Psoas muscle (tissue), 8 donors: ENCODE measurements at regions of chr16 and their contacts with region 1.

Region 1: GRCh38 chr16:1929578-1930337 is 11.5 kb upstream of the HS3ST6 start:
- DNase-seq: peak; percentile 92 to 95
- ATAC-seq: peak; percentile 94 to 98 (median 96)
- H3K4me3 ChIP-seq: peak overlapping the region; percentile 71
- H3K27ac ChIP-seq: peak overlapping the region; percentile 67
- H3K4me1 ChIP-seq: peaks cover 3% of the 10 kb centered on the region
- H3K27me3 ChIP-seq: peaks cover 0 to 4% (median 0%) of the 10 kb centered on the region in 3 donors
- CTCF ChIP-seq: peak; percentile 99

Region 2: DNA sequence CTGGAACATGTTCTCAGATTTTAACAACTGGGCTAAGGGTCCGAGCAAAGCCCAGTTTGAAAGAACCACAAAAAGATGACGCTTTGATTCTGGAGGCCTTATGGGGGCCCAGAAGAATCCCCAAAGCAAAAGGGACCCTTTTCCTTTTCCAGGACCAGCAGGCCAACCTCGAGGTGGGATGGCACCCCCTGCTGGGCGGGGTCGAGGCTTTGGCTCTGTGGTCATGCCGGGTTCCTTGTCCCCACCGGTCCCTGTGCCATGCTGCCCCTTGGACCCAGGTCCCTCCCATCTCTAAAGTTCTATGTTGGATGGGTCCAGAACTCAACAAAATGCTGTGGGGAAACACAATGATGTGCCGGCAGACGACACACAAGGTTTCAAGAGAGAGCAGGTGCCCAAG is 365.4 kb before region 1 on chr16:
- intact Hi-C with region 1: no loop called
- DNase-seq: no peak
- ATAC-seq: peak in 2 of 4 donors; percentile 54 to 67
- H3K4me3 ChIP-seq: no peak overlapping the region
- H3K27ac ChIP-seq: no peak overlapping the region
- H3K4me1 ChIP-seq: no peaks in the 10 kb centered on the region
- H3K27me3 ChIP-seq: no peaks in the 10 kb centered on the region
- CTCF ChIP-seq: peak; percentile 42

Region 3: GRCh38 chr16:1863681-1864460 is 65.9 kb before region 1 on chr16:
- intact Hi-C with region 1: loop called (anchors 1 to 5 kb)
- DNase-seq: no peak
- ATAC-seq: peak in 2 of 4 donors; percentile 27 to 42
- H3K4me3 ChIP-seq: no peak overlapping the region
- H3K27ac ChIP-seq: no peak overlapping the region
- H3K4me1 ChIP-seq: no peaks in the 10 kb centered on the region
- H3K27me3 ChIP-seq: peaks cover 0 to 50% (median 2%) of the 10 kb centered on the region in 3 donors
- CTCF ChIP-seq: peak; percentile 63